ENCODE measurements at regions of chr6 and their contacts with region 1.

Region 1: DNA sequence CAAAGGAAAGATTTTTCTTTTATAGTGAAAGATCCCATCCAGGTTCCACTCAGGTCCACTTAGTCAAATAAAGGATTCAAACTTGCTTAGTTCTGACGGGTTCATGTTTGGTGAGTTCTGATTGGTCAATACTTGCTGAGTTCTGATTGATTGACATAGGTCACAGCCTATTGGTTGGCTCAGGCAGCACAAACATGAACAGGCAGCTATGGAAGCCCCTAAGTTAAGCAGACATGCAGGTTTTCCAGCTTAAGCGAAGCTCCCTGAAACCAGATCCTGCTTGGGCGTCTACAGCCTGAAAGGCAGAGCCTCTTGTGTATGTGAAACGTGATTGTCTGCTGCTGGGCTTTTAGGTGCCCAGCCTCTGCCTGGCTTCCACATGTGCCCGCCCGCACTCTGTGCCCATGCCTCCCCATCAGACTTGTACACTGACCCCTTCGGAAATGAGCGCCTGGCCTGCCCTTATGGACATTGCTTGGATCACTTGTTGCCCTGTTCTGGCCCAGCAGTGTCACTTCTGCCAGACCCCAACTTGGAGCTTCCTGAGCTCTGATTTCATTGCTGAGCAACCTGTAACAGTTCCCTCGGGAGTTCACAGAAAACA is 45.4 kb upstream of the ECI2 start:
- DNase-seq: peak; percentile 36
- ATAC-seq: peak; percentile 61
- H3K4me3 ChIP-seq: no peak overlapping the region
- H3K27ac ChIP-seq: no peak overlapping the region
- H3K4me1 ChIP-seq: no peaks in the 10 kb centered on the region
- H3K27me3 ChIP-seq: peaks cover 0 to 14% of the 10 kb centered on the region in 2 experiments; a peak in 3 of 5 replicates
- CTCF ChIP-seq: no peak
- EP300 ChIP-seq: no peak
- POLR2A ChIP-seq: no peak
- RAD21 ChIP-seq: no peak

Region 2: GRCh38 chr6:3186974-3187382 is 993.8 kb before region 1 on chr6:
- CTCF ChIA-PET with region 1: no interaction called
- POLR2A ChIA-PET with region 1: no interaction called
- in situ Hi-C with region 1: no loop called
- intact Hi-C with region 1: loop called (anchors 5 kb)
- DNase-seq: no peak
- ATAC-seq: no peak; the same call in 2 of the 3 replicates
- H3K4me3 ChIP-seq: no peak overlapping the region
- H3K27ac ChIP-seq: no peak overlapping the region
- H3K4me1 ChIP-seq: no peaks in the 10 kb centered on the region
- H3K27me3 ChIP-seq: peaks cover 0 to 7% of the 10 kb centered on the region in 2 experiments; a peak in 2 of 5 replicates
- CTCF ChIP-seq: no peak
- EP300 ChIP-seq: no peak
- POLR2A ChIP-seq: no peak
- RAD21 ChIP-seq: no peak

Region 3: GRCh38 chr6:4102687-4103244 is 78.0 kb before region 1 on chr6:
- CTCF ChIA-PET with region 1: no interaction called
- POLR2A ChIA-PET with region 1: no interaction called
- in situ Hi-C with region 1: no loop called
- intact Hi-C with region 1: no loop called
- DNase-seq: peak; percentile 98
- ATAC-seq: peak; percentile 96
- H3K4me3 ChIP-seq: peak overlapping the region in 2 of 3 experiments; percentile 3 to 25; a peak in 1 of 6 replicates
- H3K27ac ChIP-seq: peak overlapping the region; percentile 58
- H3K4me1 ChIP-seq: peaks cover 76% of the 10 kb centered on the region
- H3K27me3 ChIP-seq: no peaks in the 10 kb centered on the region
- CTCF ChIP-seq: peak; percentile 22; the same call in 1 of the 2 replicates
- EP300 ChIP-seq: peak; percentile 88 to 91; a peak in 3 of 4 replicates
- POLR2A ChIP-seq: no peak
- RAD21 ChIP-seq: peak; percentile 25; the same call in 1 of the 2 replicates

Measured in HepG2 (cell line).